Left cardiac atrium (tissue), 4 donors: ENCODE measurements at regions of chr9 and their contacts with region 1.

Region 1: DNA sequence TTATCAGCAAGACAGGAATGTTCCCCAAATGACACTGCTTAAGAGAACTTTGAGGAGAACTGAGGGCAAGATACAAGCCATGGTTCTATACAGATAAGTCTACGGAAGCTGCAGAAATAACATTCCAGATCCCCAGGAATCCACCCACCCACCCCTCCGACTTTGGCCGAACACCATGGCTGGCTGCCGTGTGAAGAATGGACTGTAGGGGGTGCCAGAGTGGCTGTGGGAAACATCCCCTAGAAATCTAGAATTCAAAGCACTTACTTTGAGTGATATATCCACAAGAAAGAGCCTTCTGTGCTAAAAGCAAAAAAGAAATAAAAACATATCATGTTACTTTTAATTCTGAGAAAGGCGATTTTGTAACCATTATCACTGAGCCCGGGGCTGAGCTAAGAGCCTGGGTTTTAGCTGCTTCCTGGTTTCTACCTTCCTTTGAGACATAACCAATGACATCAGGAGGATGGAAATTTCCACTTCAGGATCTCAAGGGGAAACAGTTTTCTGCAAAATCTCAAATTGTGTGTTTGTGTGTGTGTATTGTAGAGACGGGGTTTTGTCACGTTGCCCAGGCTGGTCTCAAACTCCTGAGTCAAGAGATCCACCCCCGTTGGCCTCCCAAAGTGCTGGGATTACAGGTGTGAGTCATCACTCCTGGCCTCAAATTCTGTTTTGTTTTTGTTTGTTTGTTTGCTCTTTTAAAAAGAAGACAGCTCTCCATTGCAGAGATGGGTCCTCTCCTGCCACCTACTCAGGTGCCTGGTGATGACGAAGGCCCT is 36.4 kb downstream of the GGTA1 start:
- DNase-seq: peak; percentile 75
- ATAC-seq: peak; percentile 77 to 83

Region 2: DNA sequence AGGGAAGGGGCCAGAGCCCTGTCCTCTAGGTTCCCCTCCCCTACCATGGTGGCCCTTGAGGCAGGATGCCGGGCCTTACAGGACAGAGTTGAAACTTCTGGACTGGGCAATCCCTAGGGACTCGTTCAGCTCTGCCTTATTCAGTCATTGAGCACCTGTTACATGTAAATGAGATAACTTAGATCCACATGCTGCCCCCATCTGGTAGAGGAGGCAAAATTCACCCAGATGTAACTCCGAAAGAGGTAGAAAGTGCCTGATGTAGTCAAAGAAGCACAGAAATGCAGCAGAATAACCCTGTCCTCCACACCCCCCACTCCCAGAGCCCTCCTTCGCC is 34.9 kb after region 1 on chr9:
- intact Hi-C with region 1: loop called in 1 of 2 experiments (anchors 2 kb)
- DNase-seq: peak; percentile 45
- ATAC-seq: peak; percentile 39 to 59